OCI-LY7 (cell line): ENCODE measurements at regions of chr12 and their contacts with region 1.

Region 1: GRCh38 chr12:103503977-103504376 is 8.2 kb upstream of the C12orf42 start:
- DNase-seq: peak; percentile 70
- H3K4me3 ChIP-seq: no peak overlapping the region
- H3K27ac ChIP-seq: no peak overlapping the region
- H3K4me1 ChIP-seq: no peaks in the 10 kb centered on the region
- CTCF ChIP-seq: peak; percentile 81

Region 2: DNA sequence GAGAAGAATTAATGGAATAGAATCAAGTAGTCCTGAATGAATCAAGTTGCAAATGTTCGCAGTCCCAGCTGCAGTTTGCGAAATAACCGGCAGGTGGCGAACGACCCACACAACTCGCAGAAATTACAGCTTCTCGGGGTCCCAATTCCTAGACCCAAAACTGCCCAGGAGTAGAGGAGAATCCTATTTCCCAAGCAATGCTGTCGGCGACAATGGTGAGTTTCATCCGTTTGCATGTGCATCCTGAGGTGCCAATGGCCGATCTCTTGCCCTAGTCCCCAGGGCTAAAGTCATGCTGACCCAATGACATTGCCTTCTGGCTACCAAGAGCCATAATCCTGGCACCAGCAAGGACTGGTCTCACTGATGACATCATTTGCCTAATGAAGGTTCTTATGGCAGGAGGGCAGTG is 555.0 kb before region 1 on chr12:
- CTCF ChIA-PET with region 1: no interaction called
- POLR2A ChIA-PET with region 1: no interaction called
- intact Hi-C with region 1: loop called (anchors 2 kb)
- DNase-seq: peak; percentile 40
- H3K4me3 ChIP-seq: no peak overlapping the region
- H3K27ac ChIP-seq: no peak overlapping the region
- H3K4me1 ChIP-seq: no peaks in the 10 kb centered on the region
- CTCF ChIP-seq: peak; percentile 97

Region 3: DNA sequence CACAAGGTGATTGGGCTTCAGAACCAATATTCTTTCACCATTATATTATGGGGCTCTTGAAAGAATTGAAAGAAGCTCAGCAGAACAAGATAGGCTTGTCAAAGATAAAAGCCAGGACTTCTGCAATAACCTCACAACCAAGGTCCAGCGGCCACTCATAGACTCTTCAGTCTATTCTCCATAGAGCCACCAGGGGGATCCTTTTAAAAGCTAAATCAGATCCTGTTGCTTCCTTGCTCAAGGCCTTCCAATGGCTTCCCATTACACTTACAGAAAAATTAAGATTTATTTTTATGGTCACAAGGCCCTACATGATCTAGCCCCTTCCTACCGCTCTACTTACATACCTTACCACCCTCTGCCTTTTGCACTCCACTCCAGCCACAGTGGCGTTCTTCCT is 177.8 kb before region 1 on chr12:
- CTCF ChIA-PET with region 1: no interaction called
- POLR2A ChIA-PET with region 1: no interaction called
- intact Hi-C with region 1: loop called (anchors 1 kb)
- DNase-seq: peak; percentile 33
- H3K4me3 ChIP-seq: no peak overlapping the region
- H3K27ac ChIP-seq: no peak overlapping the region
- H3K4me1 ChIP-seq: no peaks in the 10 kb centered on the region
- CTCF ChIP-seq: peak; percentile 70

Region 4: GRCh38 chr12:103386451-103386850 is 117.5 kb before region 1 on chr12:
- CTCF ChIA-PET with region 1: no interaction called
- POLR2A ChIA-PET with region 1: no interaction called
- intact Hi-C with region 1: no loop called
- DNase-seq: no peak
- H3K4me3 ChIP-seq: no peak overlapping the region
- H3K27ac ChIP-seq: no peak overlapping the region
- H3K4me1 ChIP-seq: no peaks in the 10 kb centered on the region
- CTCF ChIP-seq: no peak

Region 5: GRCh38 chr12:103475073-103475472 is 28.9 kb before region 1 on chr12:
- CTCF ChIA-PET with region 1: no interaction called
- POLR2A ChIA-PET with region 1: no interaction called
- intact Hi-C with region 1: no loop called
- DNase-seq: no peak
- H3K4me3 ChIP-seq: no peak overlapping the region
- H3K27ac ChIP-seq: no peak overlapping the region
- H3K4me1 ChIP-seq: no peaks in the 10 kb centered on the region
- CTCF ChIP-seq: no peak